Activated T-helper 2 cell treated with anti-CD3 and anti-CD28 coated beads, Interferon-gamma antibody, Interleukin-2, Interleukin-4, amounts not matched to agents 10 μg/mL and 5 μg/mL and 100 μg/mL, durations not matched to agents 14 hours and 24 hours and 36 hours (primary cell): ENCODE measurements at regions of chr3 and their contacts with region 1.

Region 1: DNA sequence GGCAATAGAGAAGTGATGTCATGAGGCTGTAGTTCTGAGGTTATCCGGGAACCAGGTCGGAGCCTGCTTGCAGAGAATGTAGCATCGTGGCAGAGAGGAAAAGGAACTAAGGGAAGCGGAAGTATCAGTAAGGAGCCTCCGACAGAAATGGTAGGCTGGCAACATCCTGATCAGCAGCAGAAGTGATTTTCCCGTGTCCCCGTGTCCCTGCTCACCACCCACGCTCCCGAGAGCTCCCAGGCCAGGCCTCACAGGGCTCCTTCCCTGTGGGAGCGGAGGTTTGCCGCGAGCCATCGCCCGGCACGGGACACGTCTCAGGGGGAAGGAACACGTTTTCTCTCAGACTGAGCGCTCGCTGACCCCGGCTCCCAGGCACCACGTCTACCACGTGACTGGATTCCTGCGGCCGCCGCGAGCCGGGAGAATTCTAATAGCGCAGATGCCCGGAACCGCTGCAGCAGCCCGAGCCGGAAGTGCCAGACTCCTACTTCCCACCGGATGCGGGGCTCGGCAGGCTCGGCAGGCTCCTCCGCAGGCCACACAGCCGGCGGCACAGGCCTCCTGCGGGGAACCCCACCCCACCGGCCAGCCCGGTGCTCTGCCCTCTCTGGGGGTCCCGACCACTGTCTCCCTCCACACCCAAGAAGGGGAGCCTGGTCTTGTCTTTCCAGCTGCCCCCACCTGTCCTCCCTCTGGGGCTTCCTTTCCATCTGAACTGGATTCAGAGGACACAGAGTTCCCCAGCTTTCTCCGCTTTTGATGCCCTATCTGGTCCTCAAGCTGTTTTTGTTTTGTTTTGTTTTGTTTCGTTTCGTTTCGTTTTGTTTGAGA is 99.3 kb downstream of the BDH1 start:
- DNase-seq: peak; percentile 26
- H3K4me3 Mint-ChIP-seq: peak overlapping the region; percentile 86
- H3K27ac Mint-ChIP-seq: peak overlapping the region; percentile 79
- H3K4me1 Mint-ChIP-seq: peaks cover 12% of the 10 kb centered on the region
- H3K27me3 Mint-ChIP-seq: peaks cover 20% of the 10 kb centered on the region

Region 2: GRCh38 chr3:197298341-197298857 is 158.1 kb before region 1 on chr3 and contains the start of gene DLG1:
- intact Hi-C with region 1: loop called (anchors 5 kb)
- DNase-seq: no peak
- H3K4me3 Mint-ChIP-seq: peak within 1 kb of the TSS; percentile 91
- H3K27ac Mint-ChIP-seq: peak within 1 kb of the TSS; percentile 95
- H3K4me1 Mint-ChIP-seq: peaks cover 22% of the 10 kb centered on the region
- H3K27me3 Mint-ChIP-seq: peaks cover 27% of the 10 kb centered on the region
- total RNA-seq, gene DLG1: 77.5 and 84.1 TPM in 2 replicates

Region 3: DNA sequence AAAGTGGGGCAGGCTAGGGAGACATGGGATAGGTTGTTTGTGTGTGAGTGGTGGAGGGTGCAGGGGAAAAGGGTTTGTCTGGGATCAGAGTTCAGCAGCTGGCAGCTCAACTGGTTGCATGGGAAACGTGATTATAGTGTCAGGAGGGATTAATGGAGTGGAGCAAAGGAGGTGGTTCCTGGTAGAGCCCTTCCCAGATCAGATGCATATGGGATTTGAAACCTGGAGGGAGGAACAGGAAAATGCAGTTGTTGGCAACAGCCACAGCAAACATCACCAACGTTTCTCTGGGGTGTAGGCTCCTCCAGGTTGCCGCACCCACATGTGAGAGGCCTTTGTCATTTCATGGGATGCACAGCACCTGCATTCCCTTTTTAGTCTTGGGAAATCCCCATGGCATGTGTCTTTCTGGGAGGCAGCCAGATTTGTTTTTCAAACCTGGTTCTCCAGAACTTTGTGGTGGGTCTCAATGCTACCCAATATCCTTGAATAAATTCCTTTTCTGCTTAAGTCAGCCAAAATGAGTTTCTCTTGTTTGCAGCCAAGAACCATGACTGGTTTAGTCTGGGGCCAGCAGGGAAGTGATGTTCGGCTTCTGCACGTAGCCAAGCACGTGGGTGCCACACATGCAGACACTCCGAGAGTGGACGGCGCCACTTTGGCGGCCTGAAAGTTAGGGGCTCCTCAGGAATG is 38.0 kb after region 1 on chr3:
- intact Hi-C with region 1: no loop called
- DNase-seq: no peak
- H3K4me3 Mint-ChIP-seq: no peak overlapping the region
- H3K27ac Mint-ChIP-seq: no peak overlapping the region
- H3K4me1 Mint-ChIP-seq: no peaks in the 10 kb centered on the region
- H3K27me3 Mint-ChIP-seq: peaks cover 15% of the 10 kb centered on the region

Region 4: DNA sequence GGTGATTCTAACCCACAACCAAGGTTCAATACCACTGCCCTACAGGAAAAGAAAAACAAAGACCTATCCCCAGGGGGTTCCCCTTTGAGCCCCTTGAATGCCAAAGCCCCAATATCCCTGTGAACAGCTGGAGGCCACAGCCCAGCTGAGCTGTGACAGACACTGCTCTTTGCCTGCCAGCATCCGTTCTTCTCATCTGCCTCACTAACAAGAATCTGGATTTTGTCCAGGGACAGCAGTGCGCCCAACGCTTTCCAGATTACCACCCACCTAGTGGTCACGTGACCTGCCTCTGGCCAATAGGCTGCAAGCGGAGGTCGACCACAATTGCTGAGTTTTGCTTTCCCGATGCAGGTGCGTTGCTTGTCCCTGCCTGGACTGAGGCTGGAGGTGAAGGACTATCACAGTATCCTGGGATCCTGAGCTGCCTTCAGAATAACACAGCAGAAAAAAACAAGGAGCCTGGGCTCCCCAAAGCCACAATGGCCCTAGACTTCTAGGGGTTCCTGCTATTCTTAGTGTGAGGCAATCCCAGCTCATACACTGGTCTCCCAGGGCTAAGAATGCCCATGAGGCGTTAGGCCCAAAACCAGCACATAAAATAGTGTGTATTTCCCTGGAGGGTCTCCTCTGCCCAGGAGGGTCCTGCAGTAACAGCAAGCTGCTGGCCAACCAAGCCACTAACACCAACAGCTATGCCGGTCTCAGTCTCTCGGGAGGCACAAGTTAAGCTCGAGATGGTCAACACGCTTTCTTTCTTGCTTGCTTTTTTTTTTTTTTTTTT is 85.5 kb after region 1 on chr3:
- intact Hi-C with region 1: no loop called
- DNase-seq: no peak
- H3K4me3 Mint-ChIP-seq: no peak overlapping the region
- H3K27ac Mint-ChIP-seq: no peak overlapping the region
- H3K4me1 Mint-ChIP-seq: peaks cover 9% of the 10 kb centered on the region
- H3K27me3 Mint-ChIP-seq: no peaks in the 10 kb centered on the region

Region 5: DNA sequence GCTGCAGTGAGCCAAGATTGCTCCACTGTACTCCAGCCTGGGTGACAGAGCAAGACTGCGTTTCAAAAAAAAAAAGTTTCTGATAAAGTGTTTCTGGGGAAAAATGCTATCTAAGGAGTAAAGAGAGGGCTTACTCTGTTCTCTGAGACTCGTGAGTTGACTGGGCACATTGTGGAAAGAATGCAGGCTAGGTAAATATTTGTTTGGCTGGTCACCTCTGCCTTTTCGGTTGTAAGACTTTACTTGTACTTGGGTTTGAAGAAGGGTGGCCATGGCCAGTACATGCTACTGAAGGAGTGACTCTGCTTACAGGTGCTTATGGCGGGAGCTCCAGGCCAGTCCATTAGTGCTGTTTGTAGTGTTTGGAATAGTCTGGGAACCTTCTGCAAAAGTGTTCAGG is 211.5 kb after region 1 on chr3:
- intact Hi-C with region 1: no loop called
- DNase-seq: no peak
- H3K4me3 Mint-ChIP-seq: no peak overlapping the region
- H3K27ac Mint-ChIP-seq: no peak overlapping the region
- H3K4me1 Mint-ChIP-seq: peaks cover 2% of the 10 kb centered on the region
- H3K27me3 Mint-ChIP-seq: no peaks in the 10 kb centered on the region